ENCODE measurements at regions of chr9 and their contacts with region 1.

Region 1: DNA sequence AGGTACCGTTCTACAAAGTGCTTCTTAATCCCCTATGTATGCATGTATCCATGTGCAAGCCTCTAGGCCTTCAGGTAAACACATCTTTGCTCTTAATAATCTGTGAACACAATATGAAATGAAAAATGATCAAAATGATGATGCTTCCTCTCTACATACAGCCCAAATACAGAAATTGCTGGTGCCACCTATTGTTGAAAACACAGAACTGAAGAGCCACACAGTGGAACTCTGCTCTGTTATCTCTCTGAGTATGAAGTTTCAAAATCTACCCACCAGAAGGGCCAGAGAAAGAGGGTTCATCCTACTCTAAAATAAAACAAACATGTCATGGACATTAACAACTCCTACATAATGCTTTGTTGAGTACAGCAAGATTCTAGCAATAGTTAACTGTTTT is 71.3 kb downstream of the GLIS3 start:
- DNase-seq: no peak
- H3K4me3 Mint-ChIP-seq: no peak overlapping the region
- H3K27ac Mint-ChIP-seq: no peak overlapping the region
- H3K4me1 Mint-ChIP-seq: peaks cover 4% of the 10 kb centered on the region
- H3K27me3 Mint-ChIP-seq: peaks cover 5% of the 10 kb centered on the region

Region 2: DNA sequence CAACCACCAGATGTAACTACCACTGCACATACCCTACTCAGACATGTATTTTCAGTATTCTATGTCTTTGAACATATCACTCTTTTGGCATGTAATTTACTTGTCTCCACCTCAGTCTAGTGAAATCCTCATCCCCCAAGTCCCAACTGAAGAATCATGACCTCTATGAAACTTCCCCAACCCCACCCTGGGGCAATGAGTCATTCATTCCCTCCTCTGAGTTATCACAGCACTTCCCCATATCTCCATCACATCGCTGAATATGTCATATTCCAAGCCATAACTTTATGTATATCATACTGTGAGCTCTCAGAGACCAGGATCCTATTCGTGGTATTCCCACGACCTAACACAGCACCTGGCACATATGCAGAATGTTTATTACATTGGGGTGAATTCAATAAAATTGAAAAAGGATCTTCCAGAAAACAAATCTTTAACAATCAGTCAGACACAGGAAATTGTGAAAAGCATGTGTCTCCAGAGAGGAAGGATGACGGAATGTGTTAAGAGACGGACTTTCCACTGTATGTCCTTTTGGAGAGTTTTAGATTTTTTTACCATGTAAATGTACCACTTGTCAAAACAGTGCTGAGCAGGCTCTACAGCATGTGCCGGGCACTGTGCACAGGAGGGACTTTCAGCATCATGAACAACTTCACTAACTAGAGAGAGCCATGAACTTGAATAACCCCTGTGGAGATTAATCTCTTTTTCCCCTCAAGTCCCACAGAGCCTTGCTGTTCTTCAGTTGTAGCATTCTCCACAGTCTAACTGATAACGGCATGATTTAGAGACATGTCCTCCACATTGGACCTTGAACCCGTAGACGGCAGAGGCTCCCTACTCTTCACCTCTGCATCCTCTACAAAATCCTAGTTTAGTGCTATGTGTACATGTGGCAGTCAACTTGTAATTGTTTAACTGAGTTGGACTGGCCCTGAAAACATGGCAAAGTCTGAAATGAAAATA is 142.2 kb before region 1 on chr9:
- CTCF ChIA-PET with region 1: no interaction called
- POLR2A ChIA-PET with region 1: no interaction called
- intact Hi-C with region 1: loop called (anchors 10 kb)
- DNase-seq: no peak
- H3K4me3 Mint-ChIP-seq: no peak overlapping the region
- H3K27ac Mint-ChIP-seq: no peak overlapping the region
- H3K4me1 Mint-ChIP-seq: no peaks in the 10 kb centered on the region
- H3K27me3 Mint-ChIP-seq: peaks cover 8% of the 10 kb centered on the region

Region 3: DNA sequence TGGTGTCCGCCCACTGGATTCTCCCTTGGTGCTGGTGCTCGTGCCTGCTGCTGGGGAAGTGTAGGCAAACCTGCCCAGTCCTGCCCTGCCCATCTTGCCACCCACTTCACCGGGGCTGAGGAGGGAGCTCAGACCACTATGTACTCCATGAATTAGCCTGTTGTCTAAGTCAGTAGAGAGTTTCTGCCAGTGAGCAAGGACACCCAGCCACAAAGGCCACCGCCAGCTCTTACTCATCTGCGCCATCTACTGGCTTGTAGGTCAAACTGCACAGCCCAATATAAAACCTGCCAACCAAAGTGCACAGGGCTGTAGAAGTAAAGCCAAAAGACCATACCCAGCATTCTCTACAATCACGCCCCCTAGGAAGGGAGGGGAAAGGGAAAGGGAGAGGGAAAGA is 31.1 kb before region 1 on chr9:
- CTCF ChIA-PET with region 1: no interaction called
- POLR2A ChIA-PET with region 1: no interaction called
- intact Hi-C with region 1: no loop called
- DNase-seq: peak; percentile 20
- H3K4me3 Mint-ChIP-seq: no peak overlapping the region
- H3K27ac Mint-ChIP-seq: no peak overlapping the region
- H3K4me1 Mint-ChIP-seq: no peaks in the 10 kb centered on the region
- H3K27me3 Mint-ChIP-seq: peaks cover 4% of the 10 kb centered on the region

Region 4: GRCh38 chr9:4207881-4208615 is 20.6 kb before region 1 on chr9:
- CTCF ChIA-PET with region 1: no interaction called
- POLR2A ChIA-PET with region 1: no interaction called
- intact Hi-C with region 1: no loop called
- DNase-seq: no peak
- H3K4me3 Mint-ChIP-seq: no peak overlapping the region
- H3K27ac Mint-ChIP-seq: no peak overlapping the region
- H3K4me1 Mint-ChIP-seq: no peaks in the 10 kb centered on the region
- H3K27me3 Mint-ChIP-seq: no peaks in the 10 kb centered on the region

Measured in activated CD4-positive, alpha-beta memory T cell treated with anti-CD3 and anti-CD28 coated beads for 36 hours (primary cell).